PC-3 (cell line): ENCODE measurements at regions of chr9 and their contacts with region 1.

Region 1: DNA sequence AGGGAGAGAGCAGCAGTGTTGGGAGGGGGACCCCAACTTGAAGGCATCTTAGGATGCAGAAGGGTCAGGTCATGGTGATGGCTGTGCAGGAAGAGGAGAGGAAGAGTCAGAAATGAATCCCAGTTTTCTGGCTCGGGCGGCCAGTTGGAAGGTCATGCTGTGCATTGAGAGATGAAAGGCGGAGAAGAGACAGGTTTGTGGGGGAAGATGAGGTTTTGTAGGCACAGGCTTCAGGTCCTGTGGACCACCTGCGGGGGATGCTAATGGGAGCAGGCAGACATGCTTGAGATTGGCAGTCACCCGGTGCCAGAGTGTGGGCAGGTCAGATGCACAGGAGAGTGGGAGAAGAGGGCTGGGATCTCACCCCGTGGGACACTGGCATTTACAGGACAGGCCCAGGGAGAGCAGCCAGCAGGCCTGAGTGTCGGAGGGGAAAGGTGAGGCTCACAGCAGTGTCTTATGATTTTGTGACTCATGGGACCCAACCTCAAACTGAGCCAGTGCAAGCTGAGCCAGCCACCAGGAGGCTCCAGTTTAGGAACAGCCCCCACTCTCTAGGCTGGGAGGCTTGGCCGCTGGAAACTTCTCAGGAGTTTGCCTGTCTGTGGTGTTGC is 17.5 kb downstream of the STXBP1 start:
- DNase-seq: peak; percentile 22
- ATAC-seq: no peak
- H3K4me3 ChIP-seq: no peak overlapping the region
- H3K27ac ChIP-seq: no peak overlapping the region
- H3K4me1 ChIP-seq: no peaks in the 10 kb centered on the region
- H3K27me3 ChIP-seq: no peaks in the 10 kb centered on the region
- CTCF ChIP-seq: 0 out of 2 replicates have a peak, but pooled peaks have one; percentile 15

Region 2: GRCh38 chr9:127664667-127665507 is 35.3 kb after region 1 on chr9:
- CTCF ChIA-PET with region 1: interaction called, 3 read pairs
- POLR2A ChIA-PET with region 1: interaction called, 13 read pairs
- intact Hi-C with region 1: no loop called
- DNase-seq: no peak
- ATAC-seq: no peak
- H3K4me3 ChIP-seq: no peak overlapping the region
- H3K27ac ChIP-seq: no peak overlapping the region
- H3K4me1 ChIP-seq: no peaks in the 10 kb centered on the region
- H3K27me3 ChIP-seq: no peaks in the 10 kb centered on the region
- CTCF ChIP-seq: no peak

Region 3: DNA sequence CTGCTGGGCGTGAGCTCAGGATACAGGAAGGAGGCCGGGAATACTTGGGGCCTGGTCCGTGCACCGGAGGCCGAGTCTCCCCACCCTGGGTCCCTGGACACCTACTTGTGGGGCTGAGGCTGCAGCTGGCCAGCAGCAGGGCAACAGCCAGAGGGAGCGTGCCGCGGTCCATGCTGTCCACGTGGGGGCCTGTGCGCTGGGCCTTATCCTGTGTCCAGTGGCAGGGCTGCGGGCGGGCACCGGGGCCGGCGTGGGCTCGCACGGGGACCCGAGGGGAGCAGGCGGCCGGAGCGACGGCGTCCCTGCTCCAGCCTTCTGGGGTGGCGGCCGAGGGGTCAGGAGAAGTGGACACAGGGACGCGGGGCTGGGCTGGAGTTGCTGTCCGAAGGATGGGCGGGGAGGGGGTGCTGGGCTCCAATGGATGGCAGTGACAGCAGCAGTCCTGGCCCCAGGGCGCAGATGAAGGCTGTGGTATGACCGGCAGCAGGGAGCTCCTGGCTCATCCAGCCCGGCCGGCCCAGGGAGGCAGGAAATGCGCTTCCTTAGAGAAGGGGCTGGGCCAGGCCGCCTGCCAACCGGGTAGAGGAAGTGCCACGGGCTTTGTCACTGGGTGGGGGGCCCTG is 224.7 kb after region 1 on chr9 and contains the start of gene ENG:
- CTCF ChIA-PET with region 1: no interaction called
- POLR2A ChIA-PET with region 1: no interaction called
- intact Hi-C with region 1: no loop called
- DNase-seq: no peak
- ATAC-seq: peak; percentile 62
- H3K4me3 ChIP-seq: no peak within 1 kb of the TSS
- H3K27ac ChIP-seq: no peak within 1 kb of the TSS
- H3K4me1 ChIP-seq: no peaks in the 10 kb centered on the region
- H3K27me3 ChIP-seq: no peaks in the 10 kb centered on the region
- CTCF ChIP-seq: no peak
- total RNA-seq, gene ENG: 1.1 and 1.2 TPM in 2 replicates

Region 4: GRCh38 chr9:127899128-127899946 is 269.8 kb after region 1 on chr9 and contains the start of gene ST6GALNAC6:
- CTCF ChIA-PET with region 1: no interaction called
- POLR2A ChIA-PET with region 1: no interaction called
- intact Hi-C with region 1: no loop called
- DNase-seq: peak; percentile 68
- ATAC-seq: peak; percentile 84
- H3K4me3 ChIP-seq: peak within 1 kb of the TSS; percentile 84
- H3K27ac ChIP-seq: no peak within 1 kb of the TSS
- H3K4me1 ChIP-seq: peaks cover 5% of the 10 kb centered on the region; the same call in 1 of the 2 replicates
- H3K27me3 ChIP-seq: no peaks in the 10 kb centered on the region
- CTCF ChIP-seq: no peak
- total RNA-seq, gene ST6GALNAC6: 8.5 and 14.5 TPM in 2 replicates

Region 5: DNA sequence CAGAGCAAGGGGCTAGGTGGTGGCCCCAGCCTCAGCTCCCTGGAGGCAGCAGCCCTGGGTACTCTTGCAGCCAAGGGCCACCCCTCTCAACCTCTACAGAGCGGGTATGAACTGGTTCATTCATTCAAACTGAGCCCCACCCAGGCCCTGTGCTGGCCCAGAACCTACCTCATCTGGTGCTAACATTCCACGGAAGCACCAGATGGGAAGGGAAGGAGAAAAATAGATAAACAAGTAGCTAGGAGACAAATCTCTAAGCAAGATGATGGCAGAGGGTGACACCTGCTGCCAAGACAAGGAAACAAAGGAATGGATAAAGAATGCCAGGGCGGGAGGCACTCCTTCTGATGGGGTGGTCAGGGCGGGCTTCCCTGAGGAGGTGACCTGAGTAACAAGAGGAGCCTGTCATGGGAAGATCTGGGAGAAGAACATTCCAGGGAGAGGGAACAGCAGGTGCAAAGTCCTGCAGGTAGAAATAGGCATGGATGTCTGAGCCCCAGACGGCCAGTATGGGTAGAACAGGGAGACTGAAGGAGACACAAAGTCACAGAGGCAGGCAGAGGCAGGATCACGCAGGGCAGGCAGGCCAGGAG is 281.1 kb after region 1 on chr9:
- CTCF ChIA-PET with region 1: no interaction called
- POLR2A ChIA-PET with region 1: no interaction called
- intact Hi-C with region 1: no loop called
- DNase-seq: no peak
- ATAC-seq: peak; percentile 17; the same call in 1 of the 2 replicates
- H3K4me3 ChIP-seq: no peak overlapping the region
- H3K27ac ChIP-seq: no peak overlapping the region
- H3K4me1 ChIP-seq: peaks cover 6% of the 10 kb centered on the region; the same call in 1 of the 2 replicates
- H3K27me3 ChIP-seq: no peaks in the 10 kb centered on the region
- CTCF ChIP-seq: peak; percentile 41; the same call in 1 of the 2 replicates